Endothelial cell of umbilical vein (primary cell): ENCODE measurements at regions of chr15 and their contacts with region 1.

Region 1: DNA sequence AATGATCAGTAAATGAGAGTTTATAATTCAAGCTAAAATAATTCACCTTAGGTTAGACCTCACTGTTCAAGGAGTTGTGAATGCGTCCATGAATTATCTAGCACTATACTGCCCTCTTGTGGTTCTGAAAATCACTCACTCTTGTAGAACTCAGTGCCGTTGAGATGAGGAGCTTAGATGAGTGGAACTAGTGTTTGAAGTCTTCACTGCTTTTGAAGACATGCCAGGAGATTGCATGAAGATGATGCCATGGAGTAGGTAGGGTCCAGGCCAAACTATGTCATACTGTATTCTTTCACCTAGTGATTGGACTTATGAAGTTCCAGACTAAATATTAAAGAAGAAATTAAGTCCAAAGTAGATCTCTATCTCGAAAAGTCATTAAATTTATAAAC is 28.8 kb downstream of the LYSMD4 start:
- DNase-seq: peak; percentile 92
- H3K4me3 ChIP-seq: no peak overlapping the region
- H3K27ac ChIP-seq: peak overlapping the region; percentile 75
- H3K4me1 ChIP-seq: peaks cover 46% of the 10 kb centered on the region
- H3K27me3 ChIP-seq: no peaks in the 10 kb centered on the region
- CTCF ChIP-seq: peak; percentile 50 to 61
- POLR2A ChIP-seq: no peak

Region 2: DNA sequence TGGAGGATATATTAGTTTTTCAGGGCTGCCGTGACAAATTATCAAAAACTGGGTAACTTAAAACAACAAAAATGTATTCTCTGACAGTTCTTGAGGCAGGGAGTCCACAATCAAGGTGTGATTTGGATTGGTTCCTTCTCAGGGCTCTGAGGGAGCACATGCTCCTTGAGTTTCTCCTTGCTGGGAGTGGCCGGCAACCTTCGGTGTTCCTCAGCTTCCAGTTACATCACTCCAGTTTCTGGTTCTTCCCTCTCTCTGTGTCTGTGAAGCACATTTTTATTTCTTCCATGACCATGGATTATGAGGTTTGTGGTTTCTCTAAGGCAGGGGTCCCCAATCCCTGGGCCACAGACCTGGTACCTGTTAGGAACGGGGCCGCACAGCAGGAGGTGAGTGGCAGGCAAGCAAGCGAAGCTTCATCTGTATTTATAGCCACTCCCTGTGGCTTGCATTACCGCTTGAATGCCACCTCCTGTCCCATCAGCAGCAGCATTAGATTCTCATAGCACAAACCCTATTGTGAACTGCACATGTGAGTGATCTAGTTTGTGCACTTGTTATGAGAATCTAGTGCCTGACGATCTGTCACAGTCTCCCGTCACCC is 428.8 kb before region 1 on chr15:
- CTCF ChIA-PET with region 1: interaction called, 230 read pairs
- POLR2A ChIA-PET with region 1: no interaction called
- dilution Hi-C with region 1: loop called (anchors 25 kb)
- intact Hi-C with region 1: loop called (anchors 1 kb)
- DNase-seq: no peak
- H3K4me3 ChIP-seq: no peak overlapping the region
- H3K27ac ChIP-seq: no peak overlapping the region
- H3K4me1 ChIP-seq: no peaks in the 10 kb centered on the region
- H3K27me3 ChIP-seq: no peaks in the 10 kb centered on the region
- CTCF ChIP-seq: no peak
- POLR2A ChIP-seq: no peak

Region 3: GRCh38 chr15:99361541-99362185 is 342.8 kb before region 1 on chr15:
- CTCF ChIA-PET with region 1: interaction called, 10 read pairs
- POLR2A ChIA-PET with region 1: no interaction called
- dilution Hi-C with region 1: no loop called
- intact Hi-C with region 1: no loop called
- DNase-seq: peak; percentile 18
- H3K4me3 ChIP-seq: no peak overlapping the region
- H3K27ac ChIP-seq: no peak overlapping the region
- H3K4me1 ChIP-seq: no peaks in the 10 kb centered on the region
- H3K27me3 ChIP-seq: no peaks in the 10 kb centered on the region
- CTCF ChIP-seq: peak; percentile 48
- POLR2A ChIP-seq: no peak

Region 4: GRCh38 chr15:99424978-99425656 is 279.3 kb before region 1 on chr15:
- CTCF ChIA-PET with region 1: interaction called, 17 read pairs
- POLR2A ChIA-PET with region 1: no interaction called
- dilution Hi-C with region 1: no loop called
- intact Hi-C with region 1: loop called (anchors 2 kb)
- DNase-seq: peak; percentile 88
- H3K4me3 ChIP-seq: no peak overlapping the region
- H3K27ac ChIP-seq: peak overlapping the region; percentile 88
- H3K4me1 ChIP-seq: peaks cover 19% of the 10 kb centered on the region
- H3K27me3 ChIP-seq: no peaks in the 10 kb centered on the region
- CTCF ChIP-seq: no peak
- POLR2A ChIP-seq: no peak

Region 5: DNA sequence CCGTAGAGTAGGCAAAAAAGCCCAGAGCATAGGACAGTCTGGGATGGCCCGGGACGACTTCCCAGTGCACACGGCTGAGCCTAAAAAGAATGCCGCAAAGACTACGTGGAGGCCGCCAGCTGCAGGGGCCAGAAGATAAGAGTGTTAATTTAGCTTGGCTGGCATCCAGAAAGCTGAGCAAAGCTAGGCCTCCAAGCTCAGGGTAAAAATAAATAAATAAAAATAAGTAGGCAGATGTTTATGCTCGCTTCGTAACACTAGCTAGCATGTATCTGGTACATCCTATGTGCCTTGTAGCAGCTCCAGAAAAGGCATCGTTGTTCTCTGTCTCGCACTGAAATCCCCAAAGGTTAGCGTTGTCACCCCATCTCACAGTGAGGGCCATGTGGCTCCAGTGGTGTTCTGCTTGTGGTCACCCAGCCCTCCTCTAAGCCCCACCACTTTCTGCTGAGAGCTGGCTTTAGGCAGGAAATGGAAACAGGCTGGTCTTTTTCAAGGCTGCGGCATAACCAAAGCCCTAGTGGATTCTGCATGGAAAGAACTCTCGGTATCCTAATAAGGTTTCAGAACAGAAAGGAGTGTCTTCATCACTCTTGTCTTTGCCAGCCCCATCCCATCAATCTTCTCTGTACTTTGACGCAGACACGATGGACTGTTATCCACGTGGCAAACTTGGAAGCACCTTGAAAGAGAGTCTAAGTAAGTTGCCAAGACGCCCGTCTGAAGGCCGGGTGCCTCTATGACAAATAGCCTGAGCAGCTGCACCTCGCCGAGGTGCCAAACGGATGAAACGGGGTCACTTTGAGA is 196.7 kb before region 1 on chr15:
- CTCF ChIA-PET with region 1: interaction called, 13 read pairs
- POLR2A ChIA-PET with region 1: no interaction called
- dilution Hi-C with region 1: no loop called
- intact Hi-C with region 1: no loop called
- DNase-seq: peak; percentile 82
- H3K4me3 ChIP-seq: no peak overlapping the region
- H3K27ac ChIP-seq: peak overlapping the region; percentile 10
- H3K4me1 ChIP-seq: peaks cover 30% of the 10 kb centered on the region
- H3K27me3 ChIP-seq: no peaks in the 10 kb centered on the region
- CTCF ChIP-seq: no peak
- POLR2A ChIP-seq: no peak

Region 6: DNA sequence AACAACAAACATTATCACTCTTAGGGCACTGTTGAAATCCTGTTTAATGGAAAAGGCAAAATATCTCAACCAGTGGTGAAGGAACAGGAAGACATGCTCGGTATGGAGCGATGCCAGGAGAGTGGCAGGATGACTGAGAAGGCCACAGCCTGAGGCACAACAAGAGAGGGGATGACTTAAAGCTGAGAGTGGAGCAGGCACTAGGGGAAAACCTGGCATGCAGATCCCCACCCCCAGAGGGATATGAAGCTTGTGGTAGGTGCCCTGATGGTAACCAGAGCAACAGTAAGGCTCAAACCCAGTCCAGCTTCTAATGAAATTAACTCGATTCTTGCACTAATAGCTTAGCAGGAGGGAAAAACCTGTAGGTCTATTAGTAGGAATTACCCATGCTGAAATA is 11.6 kb before region 1 on chr15:
- CTCF ChIA-PET with region 1: interaction called, 29 read pairs
- POLR2A ChIA-PET with region 1: no interaction called
- dilution Hi-C with region 1: no loop called
- intact Hi-C with region 1: no loop called
- DNase-seq: no peak
- H3K4me3 ChIP-seq: no peak overlapping the region
- H3K27ac ChIP-seq: no peak overlapping the region
- H3K4me1 ChIP-seq: peaks cover 4% of the 10 kb centered on the region
- H3K27me3 ChIP-seq: no peaks in the 10 kb centered on the region
- CTCF ChIP-seq: no peak
- POLR2A ChIP-seq: no peak